Activated CD4-positive, alpha-beta memory T cell treated with anti-CD3 and anti-CD28 coated beads, Interleukin-2, amount 10 ng/mL, durations not matched to agents 7 days and 5 days (primary cell): ENCODE measurements at regions of chr12 and their contacts with region 1.

Region 1: DNA sequence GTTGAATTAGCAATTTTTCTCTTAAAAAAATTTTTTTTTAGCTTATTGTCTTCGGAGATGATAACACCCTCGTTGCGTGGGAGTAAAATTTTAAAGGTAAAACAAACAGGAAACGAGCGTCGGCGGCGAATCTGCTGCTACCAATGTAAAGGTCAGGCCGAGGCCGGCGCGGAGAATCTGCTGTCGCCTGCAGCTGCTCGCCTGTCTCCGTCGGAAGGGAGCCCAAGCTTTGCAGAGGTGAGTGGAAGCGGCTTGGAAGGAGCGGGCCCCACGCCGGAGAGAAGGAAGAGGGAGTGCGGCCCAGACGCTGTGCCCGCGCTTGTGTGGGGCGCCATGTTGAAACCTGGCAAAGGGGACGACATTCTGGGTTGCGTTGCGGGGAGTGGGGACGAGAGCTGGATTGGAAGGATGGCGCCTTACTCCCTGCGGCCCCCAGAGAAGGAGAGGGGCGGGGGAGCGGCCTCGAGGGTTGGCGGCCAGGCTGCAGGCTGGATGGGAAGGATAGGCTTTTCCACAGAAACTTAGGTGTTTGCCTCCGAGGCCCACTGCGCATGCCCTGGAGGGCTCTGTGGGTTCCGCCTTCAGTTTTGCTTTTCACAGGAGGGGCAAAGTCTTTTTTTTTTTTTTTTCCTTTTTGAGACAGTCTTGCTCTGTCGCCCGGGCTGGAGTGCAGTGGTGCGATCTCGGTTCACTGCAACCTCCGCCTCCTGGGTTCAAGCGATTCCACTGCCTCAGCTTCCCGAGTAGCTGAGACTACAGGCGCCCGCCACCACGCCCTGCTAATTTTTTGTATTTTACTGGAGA is at the start of gene SNRNP35:
- DNase-seq: peak; percentile 86
- H3K4me3 Mint-ChIP-seq: peak within 1 kb of the TSS; percentile 94
- H3K27ac Mint-ChIP-seq: peak within 1 kb of the TSS; percentile 99
- H3K4me1 Mint-ChIP-seq: peaks cover 23% of the 10 kb centered on the region
- H3K27me3 Mint-ChIP-seq: no peaks in the 10 kb centered on the region
- total RNA-seq, gene SNRNP35: 29.7 to 35.0 TPM

Region 2: GRCh38 chr12:123278101-123278627 is 180.0 kb before region 1 on chr12:
- CTCF ChIA-PET with region 1: no interaction called
- POLR2A ChIA-PET with region 1: no interaction called
- DNase-seq: no peak
- H3K4me3 Mint-ChIP-seq: no peak overlapping the region
- H3K27ac Mint-ChIP-seq: peak overlapping the region; percentile 58
- H3K4me1 Mint-ChIP-seq: peaks cover 6% of the 10 kb centered on the region
- H3K27me3 Mint-ChIP-seq: no peaks in the 10 kb centered on the region

Region 3: DNA sequence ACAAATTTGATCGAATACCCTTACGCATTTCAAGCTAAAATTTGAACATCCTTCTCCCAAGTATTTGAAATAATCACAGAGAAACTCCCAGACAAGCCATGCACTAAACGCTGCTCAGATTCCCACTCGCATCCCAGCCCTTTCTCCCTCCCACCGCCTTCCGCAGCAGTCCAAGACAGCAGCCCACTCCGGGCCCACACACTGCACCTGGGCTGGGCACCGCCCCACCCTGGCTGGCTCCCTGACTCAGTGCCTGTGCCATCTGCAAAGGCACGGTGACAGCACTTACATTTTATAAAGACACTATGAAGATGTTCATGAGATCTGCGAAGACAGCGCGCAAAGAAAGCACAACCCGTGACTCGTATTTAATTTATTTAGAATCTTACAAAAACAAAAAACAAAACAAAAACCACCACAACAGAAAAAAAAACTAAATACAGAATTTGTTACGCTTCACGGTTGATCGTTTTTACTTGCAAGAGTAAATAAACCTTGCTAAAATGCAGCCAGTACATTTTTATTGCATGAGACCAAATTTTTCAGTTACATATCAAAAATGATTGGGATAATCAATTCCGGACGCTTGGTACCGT is 169.3 kb before region 1 on chr12:
- CTCF ChIA-PET with region 1: no interaction called
- POLR2A ChIA-PET with region 1: no interaction called
- DNase-seq: no peak
- H3K4me3 Mint-ChIP-seq: no peak overlapping the region
- H3K27ac Mint-ChIP-seq: no peak overlapping the region
- H3K4me1 Mint-ChIP-seq: no peaks in the 10 kb centered on the region
- H3K27me3 Mint-ChIP-seq: no peaks in the 10 kb centered on the region

Region 4: GRCh38 chr12:123365025-123365917 is 92.9 kb before region 1 on chr12:
- CTCF ChIA-PET with region 1: interaction called, 6 read pairs
- POLR2A ChIA-PET with region 1: interaction called, 48 read pairs
- DNase-seq: peak; percentile 98
- H3K4me3 Mint-ChIP-seq: peak overlapping the region; percentile 82
- H3K27ac Mint-ChIP-seq: peak overlapping the region; percentile 96
- H3K4me1 Mint-ChIP-seq: peaks cover 18% of the 10 kb centered on the region
- H3K27me3 Mint-ChIP-seq: no peaks in the 10 kb centered on the region

Region 5: GRCh38 chr12:123427036-123427769 is 31.0 kb before region 1 on chr12:
- CTCF ChIA-PET with region 1: no interaction called
- POLR2A ChIA-PET with region 1: interaction called, 47 read pairs
- DNase-seq: peak; percentile 53
- H3K4me3 Mint-ChIP-seq: peak overlapping the region; percentile 10
- H3K27ac Mint-ChIP-seq: peak overlapping the region; percentile 78
- H3K4me1 Mint-ChIP-seq: peaks cover 40% of the 10 kb centered on the region
- H3K27me3 Mint-ChIP-seq: no peaks in the 10 kb centered on the region

Region 6: GRCh38 chr12:123436017-123436964 is 21.9 kb before region 1 on chr12 and contains the start of gene RILPL2:
- CTCF ChIA-PET with region 1: interaction called, 4 read pairs
- POLR2A ChIA-PET with region 1: interaction called, 47 read pairs
- DNase-seq: peak; percentile 93
- H3K4me3 Mint-ChIP-seq: peak within 1 kb of the TSS; percentile 97
- H3K27ac Mint-ChIP-seq: peak within 1 kb of the TSS; percentile 96
- H3K4me1 Mint-ChIP-seq: peaks cover 49% of the 10 kb centered on the region
- H3K27me3 Mint-ChIP-seq: no peaks in the 10 kb centered on the region
- total RNA-seq, gene RILPL2: 8.9 to 9.0 TPM

Region 7: DNA sequence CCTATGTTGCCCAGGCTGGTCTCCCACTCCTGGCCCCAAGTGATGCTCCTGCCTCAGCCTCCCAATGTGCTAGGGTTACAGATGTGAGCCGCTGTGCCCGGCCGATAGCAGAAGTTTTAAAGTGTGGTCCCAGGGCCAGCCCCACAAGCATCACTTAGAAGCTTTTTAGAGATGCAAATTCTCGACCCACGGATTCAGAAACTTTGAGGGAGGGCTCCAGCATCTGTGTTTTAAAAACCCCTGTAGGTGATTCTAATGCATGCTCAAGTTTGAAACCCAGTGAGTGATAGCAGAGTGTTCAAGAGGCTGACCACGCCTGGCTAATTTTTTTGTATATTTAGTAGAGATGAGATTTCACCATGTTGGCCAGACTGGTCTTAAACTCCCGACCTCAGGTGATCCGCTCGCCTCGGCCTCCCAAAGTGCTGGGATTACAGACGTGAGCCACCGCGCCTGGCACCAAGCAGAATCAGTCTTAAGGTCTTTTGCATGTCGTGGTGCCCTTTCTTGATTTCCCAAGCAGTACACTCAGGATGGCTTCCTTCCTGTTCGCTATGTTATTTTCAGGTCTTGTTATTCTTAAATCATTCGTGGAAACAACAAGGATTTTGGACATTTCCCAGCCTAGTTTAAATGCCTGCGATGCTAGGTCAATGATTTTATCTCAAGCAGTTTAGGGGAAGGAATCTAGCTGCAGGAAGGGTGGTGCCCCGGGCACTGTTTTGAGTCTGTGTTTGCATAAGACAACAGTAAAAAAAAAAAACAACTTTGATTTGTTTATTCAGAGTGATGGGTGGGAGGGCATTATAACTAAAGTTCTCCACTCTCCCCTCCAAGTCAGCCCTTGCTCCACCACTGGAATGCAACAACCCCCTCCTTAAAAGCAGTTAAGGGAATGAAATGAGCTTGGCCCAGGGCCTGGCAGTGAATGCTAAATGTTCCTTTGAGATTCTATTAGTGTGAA is 12.5 kb before region 1 on chr12:
- CTCF ChIA-PET with region 1: interaction called, 8 read pairs
- POLR2A ChIA-PET with region 1: interaction called, 46 read pairs
- DNase-seq: no peak
- H3K4me3 Mint-ChIP-seq: no peak overlapping the region
- H3K27ac Mint-ChIP-seq: peak overlapping the region; percentile 65
- H3K4me1 Mint-ChIP-seq: peaks cover 41% of the 10 kb centered on the region
- H3K27me3 Mint-ChIP-seq: no peaks in the 10 kb centered on the region

Region 8: GRCh38 chr12:123488539-123489230 is 30.5 kb after region 1 on chr12:
- CTCF ChIA-PET with region 1: no interaction called
- POLR2A ChIA-PET with region 1: no interaction called
- DNase-seq: no peak
- H3K4me3 Mint-ChIP-seq: no peak overlapping the region
- H3K27ac Mint-ChIP-seq: no peak overlapping the region
- H3K4me1 Mint-ChIP-seq: peaks cover 13% of the 10 kb centered on the region
- H3K27me3 Mint-ChIP-seq: no peaks in the 10 kb centered on the region

Region 9: GRCh38 chr12:123972457-123973401 is 514.5 kb after region 1 on chr12 and contains the starts of genes CCDC92 and ZNF664:
- CTCF ChIA-PET with region 1: no interaction called
- POLR2A ChIA-PET with region 1: no interaction called
- DNase-seq: peak; percentile 94
- H3K4me3 Mint-ChIP-seq: peak within 1 kb of the TSS; percentile 91
- H3K27ac Mint-ChIP-seq: peak within 1 kb of the TSS; percentile 65
- H3K4me1 Mint-ChIP-seq: peaks cover 38% of the 10 kb centered on the region
- H3K27me3 Mint-ChIP-seq: no peaks in the 10 kb centered on the region
- total RNA-seq, gene CCDC92: 20.3 to 20.5 TPM
- total RNA-seq, gene ZNF664: 42.5 to 43.4 TPM